Psoas muscle (tissue), 8 donors: ENCODE measurements at regions of chr16 and their contacts with region 1.

Region 1: GRCh38 chr16:69253870-69254341 is 57.2 kb upstream of the VPS4A start:
- DNase-seq: no peak
- ATAC-seq: peak in 3 of 4 donors; percentile 51 to 84 (median 67)
- H3K4me3 ChIP-seq: no peak overlapping the region
- H3K27ac ChIP-seq: no peak overlapping the region
- H3K4me1 ChIP-seq: peaks cover 11% of the 10 kb centered on the region
- H3K27me3 ChIP-seq: no peaks in the 10 kb centered on the region
- CTCF ChIP-seq: no peak

Region 2: DNA sequence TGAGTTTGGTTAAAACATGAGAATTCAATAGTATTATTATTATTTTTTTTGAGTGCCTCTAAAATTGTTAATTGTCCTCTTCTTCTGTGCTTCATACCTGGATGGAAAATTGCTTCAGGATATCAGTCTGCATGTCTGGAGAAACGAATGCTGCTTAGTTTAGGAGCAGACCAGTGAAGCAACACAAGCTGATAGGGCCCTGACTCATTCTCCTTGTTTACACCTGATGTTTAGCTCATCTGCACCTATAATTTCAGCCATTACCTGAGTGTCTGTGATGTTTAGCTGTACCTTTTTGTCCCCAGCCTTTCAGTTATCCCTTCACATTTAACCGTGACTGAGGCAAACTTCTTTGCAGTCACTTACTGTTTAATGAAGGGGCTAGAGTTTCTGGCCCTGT is 52.1 kb before region 1 on chr16:
- intact Hi-C with region 1: loop called in 1 of 2 experiments (anchors 1 kb)
- DNase-seq: no peak
- ATAC-seq: peak in 1 of 4 donors; percentile 42
- H3K4me3 ChIP-seq: no peak overlapping the region
- H3K27ac ChIP-seq: no peak overlapping the region
- H3K4me1 ChIP-seq: peaks cover 11% of the 10 kb centered on the region
- H3K27me3 ChIP-seq: no peaks in the 10 kb centered on the region
- CTCF ChIP-seq: no peak